ENCODE measurements at regions of chr4 and their contacts with region 1.

Region 1: GRCh38 chr4:99894998-99895397 is 771 bp upstream of the LAMTOR3 start:
- DNase-seq: no peak
- H3K4me3 Mint-ChIP-seq: peak overlapping the region; percentile 85
- H3K27ac Mint-ChIP-seq: peak overlapping the region; percentile 86
- H3K4me1 Mint-ChIP-seq: peaks cover 8% of the 10 kb centered on the region
- H3K27me3 Mint-ChIP-seq: no peaks in the 10 kb centered on the region
- CTCF ChIP-seq: no peak

Region 2: DNA sequence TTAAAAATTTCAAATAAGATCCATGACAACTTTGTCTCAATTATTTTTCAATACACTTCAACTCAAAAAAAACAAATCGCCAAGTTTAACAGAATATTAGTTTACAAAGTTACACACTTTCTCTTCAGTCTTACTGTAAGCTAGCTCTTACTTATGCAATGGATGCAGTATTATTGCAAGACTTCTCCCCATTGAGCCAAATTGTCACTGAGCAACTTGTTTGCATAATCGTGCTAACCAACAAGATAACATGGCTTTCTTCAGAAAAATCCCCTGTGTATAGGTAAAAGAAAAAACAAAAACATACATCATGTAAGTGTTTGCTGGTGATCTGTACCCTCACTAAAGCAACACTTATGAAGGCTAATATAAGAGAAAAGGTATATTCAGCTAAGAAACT is 32.6 kb after region 1 on chr4:
- CTCF ChIA-PET with region 1: no interaction called
- intact Hi-C with region 1: no loop called
- DNase-seq: no peak
- H3K4me3 Mint-ChIP-seq: no peak overlapping the region
- H3K27ac Mint-ChIP-seq: no peak overlapping the region
- H3K4me1 Mint-ChIP-seq: no peaks in the 10 kb centered on the region
- H3K27me3 Mint-ChIP-seq: no peaks in the 10 kb centered on the region
- CTCF ChIP-seq: no peak

Region 3: GRCh38 chr4:99949034-99949998 is 54.3 kb after region 1 on chr4:
- CTCF ChIA-PET with region 1: no interaction called
- intact Hi-C with region 1: loop called (anchors 5 kb)
- DNase-seq: peak; percentile 89
- H3K4me3 Mint-ChIP-seq: no peak overlapping the region
- H3K27ac Mint-ChIP-seq: no peak overlapping the region
- H3K4me1 Mint-ChIP-seq: no peaks in the 10 kb centered on the region
- H3K27me3 Mint-ChIP-seq: no peaks in the 10 kb centered on the region
- CTCF ChIP-seq: peak; percentile 67

Measured in Calu3 (cell line).